ENCODE measurements at regions of chr12 and their contacts with region 1.

Region 1: GRCh38 chr12:61701471-61701870 is 558.7 kb upstream of the USP15 start:
- DNase-seq: peak in 2 of 4 donors; percentile 69 to 79
- ATAC-seq: no peak
- H3K4me3 ChIP-seq: no peak overlapping the region
- H3K27ac ChIP-seq: no peak overlapping the region
- H3K4me1 ChIP-seq: no peaks in the 10 kb centered on the region
- H3K27me3 ChIP-seq: no peaks in the 10 kb centered on the region
- CTCF ChIP-seq: no peak

Region 2: DNA sequence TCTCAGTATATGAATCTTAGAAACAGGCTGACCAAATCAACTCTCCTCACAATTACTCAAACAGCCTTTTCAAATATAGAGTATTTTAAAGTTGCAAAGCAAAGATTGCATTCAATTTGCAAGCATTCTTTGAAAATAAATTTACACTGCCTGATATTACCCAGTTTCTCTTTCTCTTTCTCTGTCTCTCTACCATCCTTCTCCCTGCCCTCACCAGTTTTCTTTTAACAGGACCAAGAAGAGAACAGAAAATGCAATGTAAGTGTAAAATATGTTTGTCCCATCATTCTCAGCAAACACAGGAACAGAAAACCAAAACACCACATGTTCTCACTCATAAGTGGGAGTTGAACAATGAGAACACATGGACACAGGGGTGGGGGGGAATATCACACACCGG is 38.5 kb after region 1 on chr12:
- intact Hi-C with region 1: loop called in 1 of 2 experiments (anchors 5 kb)
- DNase-seq: no peak
- ATAC-seq: no peak
- H3K4me3 ChIP-seq: no peak overlapping the region
- H3K27ac ChIP-seq: no peak overlapping the region
- H3K4me1 ChIP-seq: no peaks in the 10 kb centered on the region
- H3K27me3 ChIP-seq: no peaks in the 10 kb centered on the region
- CTCF ChIP-seq: no peak